Heart left ventricle (tissue), 16 donors: ENCODE measurements at regions of chr1 and their contacts with region 1.

Region 1: GRCh38 chr1:58783993-58784757 is at the start of gene JUN:
- DNase-seq: peak; percentile 99 to 100 (median 100)
- ATAC-seq: peak; percentile 87 to 95 (median 92)
- H3K4me3 ChIP-seq: peak within 1 kb of the TSS; percentile 59 to 99 (median 92)
- H3K27ac ChIP-seq: peak within 1 kb of the TSS; percentile 95 to 100 (median 99)
- H3K4me1 ChIP-seq: peaks cover 0 to 34% (median 19%) of the 10 kb centered on the region in 12 donors
- H3K27me3 ChIP-seq: no peaks in the 10 kb centered on the region
- CTCF ChIP-seq: peak in 5 of 12 donors; percentile 8 to 45 (median 31)
- POLR2A ChIP-seq: peak; percentile 37 to 100
- total RNA-seq, gene JUN: 57.1 to 128 (median 82.8) TPM

Region 2: DNA sequence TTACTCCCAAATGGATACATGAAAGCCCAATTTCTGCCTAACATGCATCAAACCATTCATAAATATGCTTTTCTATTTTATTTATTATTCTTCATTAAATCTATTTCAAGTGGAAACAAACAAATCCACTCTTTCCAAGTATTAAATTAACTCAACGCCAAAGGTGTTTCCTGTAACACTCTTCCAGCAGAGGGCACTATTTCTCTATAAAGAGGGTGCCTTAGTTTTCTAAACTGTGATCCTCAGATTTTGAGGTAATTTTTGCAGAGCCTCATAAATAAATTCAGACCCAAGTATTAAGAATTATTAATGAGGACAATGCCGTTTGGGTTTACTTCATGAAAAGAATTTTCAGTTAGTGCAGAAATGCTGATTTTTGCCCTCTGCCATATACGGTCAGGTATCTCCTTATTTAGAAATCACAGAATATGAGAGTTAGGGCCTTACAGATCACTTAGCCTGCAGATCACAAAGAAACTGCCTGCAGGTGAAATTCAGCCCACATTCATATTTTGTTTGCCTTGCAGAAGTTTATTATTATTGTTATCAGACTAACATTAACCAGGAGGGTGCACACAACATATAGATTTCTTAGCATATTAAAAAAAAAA is 44.2 kb before region 1 on chr1:
- intact Hi-C with region 1: loop called in 1 of 10 experiments (anchors 5 kb)
- DNase-seq: peak in 1 of 5 donors; percentile 20
- ATAC-seq: peak in 1 of 4 donors; percentile 43
- H3K4me3 ChIP-seq: no peak overlapping the region
- H3K27ac ChIP-seq: no peak overlapping the region
- H3K4me1 ChIP-seq: peaks cover 0 to 21% (median 0%) of the 10 kb centered on the region in 12 donors
- H3K27me3 ChIP-seq: no peaks in the 10 kb centered on the region
- CTCF ChIP-seq: peak; percentile 72 to 92 (median 88)
- POLR2A ChIP-seq: no peak

Region 3: GRCh38 chr1:58903514-58904298 is 119.5 kb after region 1 on chr1:
- intact Hi-C with region 1: loop called (anchors 1 to 10 kb)
- DNase-seq: peak; percentile 95 to 98 (median 97)
- ATAC-seq: peak; percentile 90 to 97 (median 96)
- H3K4me3 ChIP-seq: peak overlapping the region; percentile 11 to 69 (median 60)
- H3K27ac ChIP-seq: peak overlapping the region; percentile 95 to 99 (median 97)
- H3K4me1 ChIP-seq: peaks cover 0 to 45% (median 21%) of the 10 kb centered on the region in 12 donors
- H3K27me3 ChIP-seq: no peaks in the 10 kb centered on the region
- CTCF ChIP-seq: peak in 2 of 12 donors; percentile 7 to 33
- POLR2A ChIP-seq: peak in 1 of 2 donors; percentile 90

Region 4: GRCh38 chr1:59020151-59020997 is 236.2 kb after region 1 on chr1:
- intact Hi-C with region 1: loop called in 3 of 10 experiments (anchors 2 to 10 kb)
- DNase-seq: peak in 4 of 5 donors; percentile 62 to 66 (median 64)
- ATAC-seq: peak; percentile 22 to 80 (median 70)
- H3K4me3 ChIP-seq: peak overlapping the region in 9 of 12 donors; percentile 16 to 46 (median 34)
- H3K27ac ChIP-seq: peak overlapping the region; percentile 26 to 89 (median 78)
- H3K4me1 ChIP-seq: peaks cover 0 to 54% (median 22%) of the 10 kb centered on the region in 12 donors
- H3K27me3 ChIP-seq: no peaks in the 10 kb centered on the region
- CTCF ChIP-seq: no peak
- POLR2A ChIP-seq: no peak

Region 5: GRCh38 chr1:59143133-59143487 is 358.9 kb after region 1 on chr1:
- intact Hi-C with region 1: loop called in 7 of 10 experiments (anchors 2 to 5 kb)
- DNase-seq: peak in 2 of 5 donors; percentile 23 to 41
- ATAC-seq: peak in 3 of 4 donors; percentile 25 to 43 (median 32)
- H3K4me3 ChIP-seq: no peak overlapping the region
- H3K27ac ChIP-seq: peak overlapping the region in 10 of 12 donors; percentile 2 to 91 (median 80)
- H3K4me1 ChIP-seq: peaks cover 6 to 74% (median 55%) of the 10 kb centered on the region in 12 donors
- H3K27me3 ChIP-seq: no peaks in the 10 kb centered on the region
- CTCF ChIP-seq: no peak
- POLR2A ChIP-seq: no peak

Region 6: DNA sequence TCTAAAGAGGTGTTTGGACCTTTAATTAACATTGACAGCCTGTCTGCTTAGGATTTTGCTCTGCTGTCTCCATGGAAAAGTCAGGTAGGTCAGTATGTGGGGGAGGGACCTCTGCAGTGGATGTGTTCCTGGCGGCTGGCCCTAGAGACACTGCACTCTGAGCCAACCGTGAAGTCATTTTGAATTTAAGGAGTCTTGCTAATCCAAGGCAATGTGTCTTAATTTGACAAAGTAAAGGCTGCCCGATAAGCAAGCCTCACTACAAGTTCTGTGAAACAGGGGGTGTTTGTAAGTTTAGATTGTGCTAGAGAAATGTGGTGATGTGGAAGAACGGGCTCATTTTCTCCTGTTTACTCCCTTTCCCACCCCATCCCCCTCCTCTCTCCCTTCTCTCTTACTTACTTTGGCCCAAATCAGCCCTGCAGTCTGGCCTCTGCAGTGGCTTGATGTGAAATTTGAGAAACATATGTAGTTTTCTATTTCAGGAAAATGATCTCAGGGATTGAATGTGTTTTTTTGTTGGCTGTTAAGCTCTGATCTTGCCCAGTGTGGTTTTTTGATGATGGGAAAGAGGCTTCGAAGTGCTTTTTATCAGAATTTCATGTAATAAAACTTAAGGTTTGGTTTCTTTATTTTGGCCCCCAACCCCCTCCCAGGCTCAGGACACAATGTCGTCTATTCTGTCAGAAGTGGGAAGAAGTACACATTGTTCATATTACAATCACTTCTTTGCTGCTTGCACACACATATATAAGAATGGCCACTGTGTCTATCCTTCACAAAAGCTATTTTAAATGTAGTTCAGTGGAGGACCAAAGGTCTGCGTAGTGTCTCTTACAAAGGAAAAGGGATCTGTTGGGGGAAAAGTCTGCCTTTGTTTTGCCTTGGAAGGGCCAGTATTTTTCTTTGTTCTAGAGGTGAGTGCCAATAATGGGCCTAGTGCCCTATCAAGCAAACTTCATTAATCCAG is 609.3 kb after region 1 on chr1:
- intact Hi-C with region 1: loop called in 5 of 10 experiments (anchors 2 to 10 kb)
- DNase-seq: peak; percentile 76 to 87 (median 85)
- ATAC-seq: peak; percentile 96 to 98 (median 98)
- H3K4me3 ChIP-seq: peak overlapping the region in 3 of 12 donors; percentile 4 to 10 (median 5)
- H3K27ac ChIP-seq: peak overlapping the region; percentile 67 to 95 (median 88)
- H3K4me1 ChIP-seq: peaks cover 0 to 39% (median 24%) of the 10 kb centered on the region in 12 donors
- H3K27me3 ChIP-seq: no peaks in the 10 kb centered on the region
- CTCF ChIP-seq: no peak
- POLR2A ChIP-seq: no peak

Region 7: GRCh38 chr1:59759156-59759925 is 975.2 kb after region 1 on chr1:
- intact Hi-C with region 1: loop called in 2 of 10 experiments (anchors 10 kb)
- DNase-seq: peak; percentile 79 to 89 (median 80)
- ATAC-seq: peak; percentile 83 to 96 (median 94)
- H3K4me3 ChIP-seq: peak overlapping the region in 9 of 12 donors; percentile 22 to 46 (median 37)
- H3K27ac ChIP-seq: peak overlapping the region in 9 of 12 donors; percentile 14 to 79 (median 53)
- H3K4me1 ChIP-seq: peaks cover 0 to 14% (median 5%) of the 10 kb centered on the region in 12 donors
- H3K27me3 ChIP-seq: no peaks in the 10 kb centered on the region
- CTCF ChIP-seq: peak; percentile 91 to 99 (median 94)
- POLR2A ChIP-seq: no peak